Naive thymus-derived CD4-positive, alpha-beta T cell (primary cell): ENCODE measurements at regions of chr1 and their contacts with region 1.

Region 1: GRCh38 chr1:70247768-70248167 is 26.6 kb downstream of the SRSF11 start:
- DNase-seq: no peak
- ATAC-seq: no peak
- H3K4me3 ChIP-seq: no peak overlapping the region
- H3K4me3 Mint-ChIP-seq: no peak overlapping the region
- H3K27ac ChIP-seq: no peak overlapping the region
- H3K27ac Mint-ChIP-seq: peak overlapping the region in 5 of 9 donors; percentile 21 to 57 (median 46)
- H3K4me1 ChIP-seq: no peaks in the 10 kb centered on the region
- H3K4me1 Mint-ChIP-seq: peaks cover 0 to 40% (median 13%) of the 10 kb centered on the region in 7 donors
- H3K27me3 ChIP-seq: no peaks in the 10 kb centered on the region
- H3K27me3 Mint-ChIP-seq: no peaks in the 10 kb centered on the region

Region 2: DNA sequence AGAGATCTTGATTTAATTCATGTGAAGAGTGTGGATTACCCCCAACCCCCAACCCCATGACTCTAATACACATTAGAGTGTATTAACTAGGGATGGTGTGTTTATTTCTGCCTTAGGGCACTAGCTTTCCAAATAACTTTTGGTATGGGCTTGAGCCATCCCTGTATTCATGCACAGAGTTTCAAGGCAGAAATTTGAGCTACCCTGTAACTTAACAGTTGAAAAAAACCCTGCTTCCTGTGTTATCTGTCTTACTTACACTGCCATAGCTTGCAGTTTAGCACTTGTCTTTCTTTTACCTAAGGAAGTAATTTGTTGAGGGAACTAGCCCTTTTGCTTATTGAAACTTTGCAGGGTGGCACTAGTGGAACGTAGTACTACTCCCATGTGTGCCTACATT is 20.3 kb before region 1 on chr1:
- CTCF ChIA-PET with region 1: no interaction called
- POLR2A ChIA-PET with region 1: no interaction called
- intact Hi-C with region 1: loop called in 1 of 2 experiments (anchors 2 kb)
- DNase-seq: no peak
- ATAC-seq: peak; percentile 66
- H3K4me3 ChIP-seq: no peak overlapping the region
- H3K4me3 Mint-ChIP-seq: peak overlapping the region in 8 of 10 donors; percentile 1 to 63 (median 39)
- H3K27ac ChIP-seq: no peak overlapping the region
- H3K27ac Mint-ChIP-seq: peak overlapping the region in 6 of 9 donors; percentile 33 to 81 (median 46)
- H3K4me1 ChIP-seq: peaks cover 22 to 38% of the 10 kb centered on the region in 2 donors
- H3K4me1 Mint-ChIP-seq: peaks cover 37 to 73% (median 56%) of the 10 kb centered on the region in 7 donors
- H3K27me3 ChIP-seq: no peaks in the 10 kb centered on the region
- H3K27me3 Mint-ChIP-seq: no peaks in the 10 kb centered on the region

Region 3: GRCh38 chr1:70234733-70235132 is 13.0 kb before region 1 on chr1:
- CTCF ChIA-PET with region 1: no interaction called
- POLR2A ChIA-PET with region 1: no interaction called
- intact Hi-C with region 1: loop called (anchors 1 to 2 kb)
- DNase-seq: no peak
- ATAC-seq: no peak
- H3K4me3 ChIP-seq: no peak overlapping the region
- H3K4me3 Mint-ChIP-seq: no peak overlapping the region
- H3K27ac ChIP-seq: no peak overlapping the region
- H3K27ac Mint-ChIP-seq: peak overlapping the region in 2 of 9 donors; percentile 22 to 32
- H3K4me1 ChIP-seq: no peaks in the 10 kb centered on the region
- H3K4me1 Mint-ChIP-seq: peaks cover 6 to 23% (median 17%) of the 10 kb centered on the region in 7 donors
- H3K27me3 ChIP-seq: no peaks in the 10 kb centered on the region
- H3K27me3 Mint-ChIP-seq: no peaks in the 10 kb centered on the region

Region 4: DNA sequence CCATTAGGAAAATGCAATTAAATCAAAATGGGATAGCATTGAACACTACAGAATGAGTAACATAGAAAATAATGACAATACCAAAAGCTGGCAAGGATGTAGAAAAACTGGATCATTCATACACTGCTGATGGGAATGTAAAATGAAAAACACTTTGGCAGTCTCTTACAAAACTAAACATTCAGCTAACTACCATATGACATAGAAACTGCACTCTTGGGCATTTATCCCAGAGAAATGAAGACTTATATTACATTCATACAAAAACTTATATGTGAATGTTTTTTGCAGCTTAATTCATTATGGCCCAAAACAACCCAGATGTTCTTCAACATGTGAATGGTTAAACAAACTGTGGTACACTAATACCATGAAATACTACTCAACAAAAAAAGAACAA is 40.4 kb after region 1 on chr1:
- CTCF ChIA-PET with region 1: no interaction called
- POLR2A ChIA-PET with region 1: no interaction called
- intact Hi-C with region 1: loop called in 1 of 2 experiments (anchors 5 kb)
- DNase-seq: no peak
- ATAC-seq: no peak
- H3K4me3 ChIP-seq: no peak overlapping the region
- H3K4me3 Mint-ChIP-seq: no peak overlapping the region
- H3K27ac ChIP-seq: no peak overlapping the region
- H3K27ac Mint-ChIP-seq: peak overlapping the region in 1 of 9 donors; percentile 20
- H3K4me1 ChIP-seq: no peaks in the 10 kb centered on the region
- H3K4me1 Mint-ChIP-seq: peaks cover 0 to 1% (median 0%) of the 10 kb centered on the region in 7 donors
- H3K27me3 ChIP-seq: no peaks in the 10 kb centered on the region
- H3K27me3 Mint-ChIP-seq: no peaks in the 10 kb centered on the region

Region 5: DNA sequence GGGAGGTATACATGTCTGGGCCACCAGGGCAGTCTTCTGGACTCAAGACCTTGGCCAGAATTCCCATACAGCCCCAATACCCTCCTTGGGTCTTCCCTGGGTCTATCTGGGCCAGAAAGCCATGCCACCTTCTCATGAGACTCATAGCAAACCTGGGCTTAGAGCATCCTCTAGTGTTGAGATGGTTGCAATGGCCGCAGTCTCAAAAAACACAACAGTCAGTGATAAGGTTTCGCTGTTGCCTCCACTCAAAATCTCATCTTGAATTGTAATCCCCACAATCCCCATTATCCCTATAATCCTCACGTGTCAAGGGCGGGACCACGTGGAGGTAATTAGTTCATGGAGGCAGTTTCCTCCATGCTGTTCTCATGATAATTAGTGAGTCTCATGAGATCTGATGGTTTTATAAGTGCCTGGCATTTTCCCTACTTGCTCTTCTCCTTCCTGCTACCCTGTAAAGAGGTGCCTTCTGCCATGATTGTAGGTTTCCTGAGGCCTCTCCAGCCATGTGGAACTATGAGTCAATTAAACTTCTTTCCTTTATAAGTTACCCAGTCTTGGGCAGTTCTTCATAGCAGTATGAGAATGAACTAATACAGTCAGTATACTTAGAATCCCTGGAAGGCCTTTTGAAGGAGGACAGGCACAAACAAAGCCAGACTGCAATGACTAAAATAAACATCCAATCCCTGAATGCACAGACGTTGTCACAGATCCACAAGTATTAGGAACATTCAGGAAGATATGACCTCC is 240.3 kb after region 1 on chr1:
- CTCF ChIA-PET with region 1: no interaction called
- POLR2A ChIA-PET with region 1: no interaction called
- intact Hi-C with region 1: loop called in 1 of 2 experiments (anchors 10 kb)
- DNase-seq: peak in 5 of 9 donors; percentile 2 to 20 (median 7)
- ATAC-seq: peak; percentile 42
- H3K4me3 ChIP-seq: no peak overlapping the region
- H3K4me3 Mint-ChIP-seq: no peak overlapping the region
- H3K27ac ChIP-seq: no peak overlapping the region
- H3K27ac Mint-ChIP-seq: no peak overlapping the region
- H3K4me1 ChIP-seq: no peaks in the 10 kb centered on the region
- H3K4me1 Mint-ChIP-seq: peaks cover 0 to 3% (median 0%) of the 10 kb centered on the region in 7 donors
- H3K27me3 ChIP-seq: no peaks in the 10 kb centered on the region
- H3K27me3 Mint-ChIP-seq: peaks cover 0 to 16% (median 6%) of the 10 kb centered on the region in 5 donors

Region 6: GRCh38 chr1:70583522-70583921 is 335.8 kb after region 1 on chr1:
- CTCF ChIA-PET with region 1: no interaction called
- POLR2A ChIA-PET with region 1: no interaction called
- intact Hi-C with region 1: no loop called
- DNase-seq: no peak
- ATAC-seq: no peak
- H3K4me3 ChIP-seq: no peak overlapping the region
- H3K4me3 Mint-ChIP-seq: no peak overlapping the region
- H3K27ac ChIP-seq: no peak overlapping the region
- H3K27ac Mint-ChIP-seq: no peak overlapping the region
- H3K4me1 ChIP-seq: no peaks in the 10 kb centered on the region
- H3K4me1 Mint-ChIP-seq: no peaks in the 10 kb centered on the region
- H3K27me3 ChIP-seq: no peaks in the 10 kb centered on the region
- H3K27me3 Mint-ChIP-seq: peaks cover 0 to 2% (median 0%) of the 10 kb centered on the region in 5 donors

Region 7: GRCh38 chr1:70706381-70707037 is 458.7 kb after region 1 on chr1:
- CTCF ChIA-PET with region 1: no interaction called
- POLR2A ChIA-PET with region 1: no interaction called
- intact Hi-C with region 1: no loop called
- DNase-seq: no peak
- ATAC-seq: no peak
- H3K4me3 ChIP-seq: no peak overlapping the region
- H3K4me3 Mint-ChIP-seq: no peak overlapping the region
- H3K27ac ChIP-seq: no peak overlapping the region
- H3K27ac Mint-ChIP-seq: no peak overlapping the region
- H3K4me1 ChIP-seq: no peaks in the 10 kb centered on the region
- H3K4me1 Mint-ChIP-seq: no peaks in the 10 kb centered on the region
- H3K27me3 ChIP-seq: no peaks in the 10 kb centered on the region
- H3K27me3 Mint-ChIP-seq: peaks cover 5 to 15% (median 12%) of the 10 kb centered on the region in 5 donors